ENCODE measurements at regions of chr2 and their contacts with region 1.

Region 1: GRCh38 chr2:26345545-26346453 is at the start of gene SELENOI:
- DNase-seq: peak; percentile 100
- H3K4me3 ChIP-seq: peak within 1 kb of the TSS; percentile 83 to 93 (median 90)
- H3K27ac ChIP-seq: peak within 1 kb of the TSS; percentile 93
- H3K4me1 ChIP-seq: peaks cover 20% of the 10 kb centered on the region
- H3K27me3 ChIP-seq: no peaks in the 10 kb centered on the region
- CTCF ChIP-seq: no peak
- POLR2A ChIP-seq: peak; percentile 91
- total RNA-seq, gene SELENOI: 23.1 and 25.3 TPM in 2 replicates

Region 2: DNA sequence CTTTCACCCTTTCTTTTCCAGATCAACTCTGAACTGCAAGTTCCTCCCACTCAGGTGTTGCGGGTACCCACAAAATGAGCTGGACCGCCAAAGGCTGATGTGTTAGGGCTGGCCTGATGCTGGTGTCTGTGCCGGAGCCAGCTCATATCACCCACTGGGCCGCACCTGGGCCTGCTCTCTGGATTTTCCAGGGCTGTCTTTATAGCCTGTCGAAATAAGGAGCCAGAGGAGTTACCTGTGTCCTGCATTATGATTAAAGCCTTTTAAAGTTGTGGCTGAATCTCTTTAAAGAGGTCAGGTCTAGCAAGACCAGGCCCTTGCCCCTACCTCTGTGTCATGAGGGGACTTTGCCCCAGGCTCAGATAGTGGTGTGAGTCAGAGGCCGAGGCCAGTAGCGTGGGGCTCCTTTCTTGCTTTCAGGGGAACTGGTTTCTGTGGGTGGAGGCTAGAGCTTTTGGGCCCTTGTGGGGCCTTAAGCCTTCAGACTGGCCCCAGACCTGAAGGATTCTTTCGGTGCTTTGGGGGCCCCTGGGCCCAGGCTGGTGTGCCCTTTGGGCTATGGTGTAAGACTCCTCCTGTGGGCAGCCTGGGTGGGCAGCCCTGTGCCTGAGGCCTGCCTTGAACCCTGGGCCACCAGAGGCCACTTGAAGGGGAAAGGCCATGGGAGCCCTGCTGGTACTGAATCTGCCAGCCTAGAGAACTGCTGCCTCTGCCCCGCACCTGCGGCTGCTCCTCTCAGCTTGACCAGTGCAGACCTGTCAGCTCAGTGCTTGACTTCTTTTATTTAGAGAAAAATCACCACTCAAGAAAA is 110.8 kb after region 1 on chr2:
- CTCF ChIA-PET with region 1: no interaction called
- POLR2A ChIA-PET with region 1: no interaction called
- dilution Hi-C with region 1: no loop called
- intact Hi-C with region 1: loop called (anchors 1 kb)
- DNase-seq: no peak
- H3K4me3 ChIP-seq: no peak overlapping the region
- H3K27ac ChIP-seq: no peak overlapping the region
- H3K4me1 ChIP-seq: peaks cover 16% of the 10 kb centered on the region
- H3K27me3 ChIP-seq: no peaks in the 10 kb centered on the region
- CTCF ChIP-seq: no peak
- POLR2A ChIP-seq: no peak

Measured in endothelial cell of umbilical vein (primary cell).